Esophagus squamous epithelium (tissue), 5 donors: ENCODE measurements at regions of chr5 and their contacts with region 1.

Region 1: DNA sequence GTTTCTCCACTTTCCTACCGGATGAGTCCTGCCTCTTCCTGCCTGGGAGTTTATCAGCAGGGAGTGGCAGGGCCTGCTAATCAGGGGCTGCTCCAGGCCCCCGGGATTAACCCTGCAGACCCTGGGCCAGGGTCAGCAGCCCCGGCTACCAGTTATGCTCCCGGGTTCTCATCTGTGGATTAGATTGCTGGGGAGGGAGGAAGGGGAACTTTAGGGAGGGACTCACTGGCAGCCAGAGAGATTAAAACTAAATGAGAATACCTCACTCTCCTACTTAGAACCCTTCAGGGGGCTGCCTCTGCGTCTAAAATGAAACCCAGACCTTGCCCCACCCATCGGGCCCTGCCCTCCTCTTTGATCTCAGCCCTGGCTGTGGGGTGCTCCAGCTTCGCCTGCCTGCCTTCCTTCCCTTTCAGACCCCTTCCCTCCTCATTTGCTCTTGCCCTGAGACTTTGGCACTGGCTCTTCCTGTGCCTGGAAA is 130.5 kb upstream of the HAND1 start:
- DNase-seq: no peak
- H3K4me3 ChIP-seq: no peak overlapping the region
- H3K27ac ChIP-seq: no peak overlapping the region
- H3K4me1 ChIP-seq: peaks cover 9 to 33% (median 18%) of the 10 kb centered on the region in 3 donors
- H3K27me3 ChIP-seq: peaks cover 0 to 95% (median 6%) of the 10 kb centered on the region in 4 donors
- CTCF ChIP-seq: no peak
- POLR2A ChIP-seq: no peak

Region 2: GRCh38 chr5:154467655-154468354 is 140.8 kb before region 1 on chr5:
- intact Hi-C with region 1: loop called (anchors 5 kb)
- DNase-seq: peak; percentile 7
- H3K4me3 ChIP-seq: no peak overlapping the region
- H3K27ac ChIP-seq: no peak overlapping the region
- H3K4me1 ChIP-seq: peaks cover 0 to 10% (median 0%) of the 10 kb centered on the region in 3 donors
- H3K27me3 ChIP-seq: peaks cover 0 to 65% (median 7%) of the 10 kb centered on the region in 4 donors
- CTCF ChIP-seq: peak; percentile 74 to 95 (median 80)
- POLR2A ChIP-seq: no peak